AG04450 (cell line): ENCODE measurements at regions of chr11 and their contacts with region 1.

Region 1: DNA sequence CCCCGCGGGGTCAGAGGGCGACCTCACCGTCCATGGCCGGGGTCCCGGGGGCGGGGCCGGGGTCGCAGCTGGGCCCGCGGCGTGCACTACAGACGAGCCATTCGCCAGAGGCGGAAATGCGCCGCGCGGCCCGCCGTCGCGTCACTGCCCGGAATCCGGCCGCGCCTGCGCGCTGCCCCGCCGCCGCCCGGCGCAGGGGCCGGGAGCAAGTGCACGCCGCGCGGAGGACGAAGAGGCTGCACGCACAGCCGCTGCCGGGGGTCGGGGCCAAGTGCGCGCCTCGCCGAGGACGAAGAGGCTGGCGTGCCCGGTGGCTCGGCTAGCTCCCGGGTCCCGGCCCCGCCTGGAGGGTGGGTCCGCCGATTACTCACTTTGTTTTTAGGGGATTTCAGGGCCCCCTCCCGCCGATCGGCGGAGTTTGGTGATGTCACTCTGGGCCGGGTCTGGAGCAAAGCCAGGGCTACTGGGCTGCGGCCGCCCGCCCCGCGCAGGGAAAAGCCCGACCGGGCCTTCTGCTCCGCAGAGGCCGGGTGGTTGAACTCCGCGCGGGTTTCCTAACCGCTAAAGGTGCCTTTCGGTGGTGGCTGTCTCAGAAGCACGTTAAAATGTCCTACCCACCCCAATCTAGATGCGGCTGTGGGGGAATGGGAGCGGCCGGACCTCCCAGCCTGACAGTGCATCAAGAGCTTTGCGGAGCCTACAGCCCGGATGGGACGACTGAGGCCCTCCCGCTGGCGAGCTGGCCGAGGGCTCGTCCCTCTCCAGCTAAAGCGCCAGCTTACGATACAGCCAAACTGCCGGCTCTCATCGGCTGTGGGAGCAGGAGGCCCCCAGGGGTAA is at the start of gene RELA:
- DNase-seq: peak; percentile 87
- H3K4me3 ChIP-seq: peak within 1 kb of the TSS; percentile 98
- H3K27ac ChIP-seq: peak within 1 kb of the TSS; percentile 98
- H3K27me3 ChIP-seq: no peaks in the 10 kb centered on the region
- CTCF ChIP-seq: no peak
- polyA plus RNA-seq, gene RELA: 23.4 and 26.7 TPM in 2 replicates

Region 2: GRCh38 chr11:65652511-65653231 is 10.3 kb before region 1 on chr11:
- CTCF ChIA-PET with region 1: no interaction called
- POLR2A ChIA-PET with region 1: interaction called, 24 read pairs
- DNase-seq: peak; percentile 89
- H3K4me3 ChIP-seq: peak overlapping the region; percentile 63
- H3K27ac ChIP-seq: peak overlapping the region; percentile 98
- H3K27me3 ChIP-seq: no peaks in the 10 kb centered on the region
- CTCF ChIP-seq: no peak